ENCODE measurements at regions of chr10 and their contacts with region 1.

Region 1: GRCh38 chr10:49080071-49080470 is 35.3 kb downstream of the VSTM4 start:
- DNase-seq: no peak
- H3K4me3 Mint-ChIP-seq: no peak overlapping the region
- H3K27ac Mint-ChIP-seq: peak overlapping the region; percentile 64
- H3K4me1 Mint-ChIP-seq: peaks cover 49% of the 10 kb centered on the region
- H3K27me3 Mint-ChIP-seq: no peaks in the 10 kb centered on the region

Region 2: GRCh38 chr10:48981310-48981907 is 98.7 kb before region 1 on chr10:
- intact Hi-C with region 1: loop called (anchors 5 kb)
- DNase-seq: peak; percentile 20
- H3K4me3 Mint-ChIP-seq: no peak overlapping the region
- H3K27ac Mint-ChIP-seq: no peak overlapping the region
- H3K4me1 Mint-ChIP-seq: no peaks in the 10 kb centered on the region
- H3K27me3 Mint-ChIP-seq: no peaks in the 10 kb centered on the region

Region 3: GRCh38 chr10:49115015-49115795 is 35.1 kb after region 1 on chr10 and contains the start of gene VSTM4:
- intact Hi-C with region 1: loop called (anchors 5 kb)
- DNase-seq: no peak
- H3K4me3 Mint-ChIP-seq: peak within 1 kb of the TSS; percentile 69
- H3K27ac Mint-ChIP-seq: no peak within 1 kb of the TSS
- H3K4me1 Mint-ChIP-seq: peaks cover 5% of the 10 kb centered on the region
- H3K27me3 Mint-ChIP-seq: peaks cover 53% of the 10 kb centered on the region
- total RNA-seq, gene VSTM4: 0.53 and 0.57 TPM in 2 replicates

Region 4: GRCh38 chr10:49153971-49154370 is 73.9 kb after region 1 on chr10:
- intact Hi-C with region 1: no loop called
- DNase-seq: no peak
- H3K4me3 Mint-ChIP-seq: no peak overlapping the region
- H3K27ac Mint-ChIP-seq: no peak overlapping the region
- H3K4me1 Mint-ChIP-seq: peaks cover 37% of the 10 kb centered on the region
- H3K27me3 Mint-ChIP-seq: peaks cover 3% of the 10 kb centered on the region

Region 5: DNA sequence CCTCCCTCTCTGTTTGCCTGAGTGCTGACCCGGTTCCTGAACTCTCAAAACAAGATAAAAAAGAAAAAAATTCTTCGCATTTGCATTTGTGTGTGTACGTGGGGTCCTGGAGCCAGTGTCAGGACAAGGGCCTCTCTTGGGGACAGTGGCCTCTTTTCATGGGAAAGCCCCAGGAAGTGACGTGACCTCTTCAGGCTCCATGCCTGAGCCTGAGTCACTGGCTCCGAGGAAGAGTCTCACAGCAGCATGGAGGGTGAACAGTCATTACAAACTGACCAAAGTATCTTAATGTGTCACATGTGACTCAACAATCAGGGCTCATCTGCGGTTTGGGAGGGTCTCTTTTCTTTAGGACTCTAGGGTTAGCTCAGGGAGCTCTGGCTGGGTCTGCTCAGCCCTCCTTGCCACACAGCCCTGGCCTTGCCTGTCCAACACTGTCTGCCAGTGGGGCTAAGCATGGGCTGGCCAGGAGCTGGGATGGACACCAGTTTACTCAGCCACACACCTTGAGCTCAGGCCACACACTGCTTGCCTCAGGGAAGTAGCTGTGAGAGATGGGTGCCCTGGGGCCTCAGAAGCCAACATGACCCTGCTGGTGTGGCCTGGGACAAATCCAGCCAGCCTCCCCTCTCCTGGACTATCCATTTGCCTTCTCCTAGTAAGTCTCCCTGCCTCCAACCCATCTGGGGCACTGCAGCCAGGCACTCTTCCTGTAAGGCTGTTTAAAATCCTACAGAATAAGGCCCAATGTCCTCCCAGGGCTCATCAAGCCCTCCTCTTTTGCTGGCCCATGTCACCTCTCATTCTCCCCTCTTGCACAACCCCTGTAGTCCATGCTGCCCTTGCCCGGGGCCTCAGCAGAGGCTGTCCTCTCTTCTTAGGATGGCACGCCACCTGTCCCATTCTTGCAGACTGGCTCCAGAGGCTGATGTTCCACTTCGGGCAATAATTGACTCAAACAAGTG is 97.6 kb after region 1 on chr10:
- intact Hi-C with region 1: loop called (anchors 1 kb)
- DNase-seq: peak; percentile 71
- H3K4me3 Mint-ChIP-seq: peak overlapping the region; percentile 67
- H3K27ac Mint-ChIP-seq: peak overlapping the region; percentile 97
- H3K4me1 Mint-ChIP-seq: peaks cover 79% of the 10 kb centered on the region
- H3K27me3 Mint-ChIP-seq: no peaks in the 10 kb centered on the region

Region 6: DNA sequence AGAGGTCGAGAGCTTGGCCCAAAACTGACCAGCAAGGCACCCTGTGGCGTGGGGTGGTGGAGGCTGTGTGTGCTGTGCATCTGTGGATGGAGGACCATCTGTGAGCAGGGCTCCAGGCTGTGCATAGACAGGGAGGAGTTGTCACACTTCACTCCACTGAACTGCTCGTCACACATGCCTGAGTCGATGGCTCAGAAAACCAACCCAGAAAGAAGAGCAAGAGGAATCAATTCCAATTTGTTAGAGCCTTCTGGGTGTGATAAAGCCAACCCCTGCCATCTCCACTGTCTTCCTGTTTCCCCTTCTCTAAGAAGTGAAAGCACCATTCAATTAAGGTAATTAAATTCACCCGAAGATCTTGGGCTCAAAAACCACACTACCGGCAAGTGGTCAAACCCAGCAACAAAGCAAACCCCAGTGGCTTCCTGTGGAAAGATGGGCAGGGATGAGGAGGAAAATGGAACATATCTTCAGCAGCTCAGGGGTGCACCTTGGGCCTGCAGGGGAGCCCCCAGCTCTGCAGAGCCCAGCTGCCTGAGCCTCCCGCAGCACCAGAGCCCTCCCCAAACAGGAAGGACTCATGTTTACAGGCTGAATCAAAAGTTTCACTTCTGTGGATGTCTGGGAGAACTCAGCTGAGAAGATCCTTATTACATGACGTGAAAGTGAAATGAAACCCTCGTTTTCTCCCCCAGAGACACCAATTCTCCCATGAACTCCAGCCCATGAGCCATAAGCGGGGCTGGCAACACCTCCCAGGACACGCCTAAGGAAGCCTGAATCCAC is 229.7 kb after region 1 on chr10:
- intact Hi-C with region 1: loop called (anchors 5 kb)
- DNase-seq: peak; percentile 34
- H3K4me3 Mint-ChIP-seq: peak overlapping the region; percentile 1
- H3K27ac Mint-ChIP-seq: peak overlapping the region; percentile 59
- H3K4me1 Mint-ChIP-seq: peaks cover 24% of the 10 kb centered on the region
- H3K27me3 Mint-ChIP-seq: peaks cover 13% of the 10 kb centered on the region

Region 7: GRCh38 chr10:49538381-49539319 is 458.6 kb after region 1 on chr10 and contains the start of gene ERCC6:
- intact Hi-C with region 1: loop called (anchors 5 kb)
- DNase-seq: peak; percentile 96
- H3K4me3 Mint-ChIP-seq: peak within 1 kb of the TSS; percentile 89
- H3K27ac Mint-ChIP-seq: peak within 1 kb of the TSS; percentile 94
- H3K4me1 Mint-ChIP-seq: peaks cover 36% of the 10 kb centered on the region
- H3K27me3 Mint-ChIP-seq: peaks cover 3% of the 10 kb centered on the region
- total RNA-seq, gene ERCC6: 22.7 and 26.2 TPM in 2 replicates

Measured in activated T-helper 2 cell treated with anti-CD3 and anti-CD28 coated beads, Interferon-gamma antibody, Interleukin-2, Interleukin-4, amounts not matched to agents 10 μg/mL and 5 μg/mL and 100 μg/mL, durations not matched to agents 14 hours and 24 hours and 36 hours (primary cell).